SK-N-SH (cell line): ENCODE measurements at regions of chr17 and their contacts with region 1.

Region 1: DNA sequence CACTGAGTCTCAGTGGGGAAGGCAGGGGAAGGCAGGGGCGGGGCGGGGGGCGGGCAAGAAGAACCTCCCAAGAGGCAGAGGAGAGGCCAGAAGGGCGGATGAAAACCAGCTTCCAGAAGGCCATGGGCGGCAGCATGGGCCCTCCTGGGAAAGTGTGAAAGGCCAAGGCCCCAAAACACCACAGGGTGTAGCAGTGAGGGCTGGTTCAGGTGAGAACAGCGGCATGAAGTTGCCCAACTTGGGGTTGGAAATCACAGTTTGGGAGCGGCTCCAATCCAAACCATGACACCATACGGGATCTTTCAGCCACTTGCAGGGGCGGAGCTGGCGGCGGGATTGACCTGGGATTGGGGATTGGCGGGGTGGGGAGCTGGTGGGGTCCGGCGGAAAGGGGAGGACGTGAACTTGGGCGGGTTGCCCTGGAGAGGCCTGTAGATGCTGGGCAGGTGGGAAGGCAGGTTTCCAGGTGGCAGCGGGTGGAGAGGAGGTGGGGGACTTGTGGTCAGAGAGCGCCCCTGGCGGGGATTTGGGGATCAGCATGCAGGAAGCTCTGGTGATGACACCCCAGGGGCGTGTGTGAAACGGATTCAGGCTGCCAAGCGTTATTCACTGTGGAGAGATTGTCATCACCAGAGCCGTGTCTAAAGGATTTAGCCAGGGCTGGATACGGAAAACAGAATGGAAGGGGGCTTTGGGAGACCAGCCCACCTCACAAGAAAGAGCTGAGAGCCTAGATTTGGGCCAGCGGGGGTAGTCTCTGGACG is 80.9 kb downstream of the ARHGAP23 start:
- DNase-seq: peak; percentile 98
- H3K4me3 ChIP-seq: peak overlapping the region; percentile 17 to 50; a peak in 2 of 4 replicates
- H3K27ac ChIP-seq: no peak overlapping the region
- H3K4me1 ChIP-seq: peaks cover 13 to 14% of the 10 kb centered on the region in 2 experiments; a peak in 2 of 4 replicates
- H3K27me3 ChIP-seq: no peaks in the 10 kb centered on the region
- CTCF ChIP-seq: peak; percentile 83
- EP300 ChIP-seq: no peak
- RAD21 ChIP-seq: peak; percentile 70

Region 2: DNA sequence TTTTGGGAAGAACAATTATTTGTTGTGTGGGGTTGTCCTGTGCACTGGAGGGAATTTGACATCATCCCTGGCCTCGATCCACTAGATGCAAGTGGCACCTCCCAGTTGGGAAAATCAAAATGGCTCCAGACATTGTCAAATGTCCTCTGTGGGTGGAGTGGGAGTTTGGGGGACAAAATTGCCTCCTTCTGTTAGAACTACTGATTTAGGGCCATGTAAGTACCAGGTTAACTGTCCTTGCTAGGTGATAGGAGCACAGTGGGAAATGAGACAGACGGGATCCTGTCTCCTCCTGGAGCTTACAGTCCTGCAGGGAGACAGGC is 24.1 kb before region 1 on chr17:
- CTCF ChIA-PET with region 1: interaction called, 15 read pairs
- POLR2A ChIA-PET with region 1: no interaction called
- DNase-seq: no peak
- H3K4me3 ChIP-seq: peak overlapping the region in 1 of 2 experiments; percentile 43; a peak in 1 of 4 replicates
- H3K27ac ChIP-seq: no peak overlapping the region
- H3K4me1 ChIP-seq: no peaks in the 10 kb centered on the region
- H3K27me3 ChIP-seq: no peaks in the 10 kb centered on the region
- CTCF ChIP-seq: no peak
- EP300 ChIP-seq: no peak
- RAD21 ChIP-seq: no peak

Region 3: DNA sequence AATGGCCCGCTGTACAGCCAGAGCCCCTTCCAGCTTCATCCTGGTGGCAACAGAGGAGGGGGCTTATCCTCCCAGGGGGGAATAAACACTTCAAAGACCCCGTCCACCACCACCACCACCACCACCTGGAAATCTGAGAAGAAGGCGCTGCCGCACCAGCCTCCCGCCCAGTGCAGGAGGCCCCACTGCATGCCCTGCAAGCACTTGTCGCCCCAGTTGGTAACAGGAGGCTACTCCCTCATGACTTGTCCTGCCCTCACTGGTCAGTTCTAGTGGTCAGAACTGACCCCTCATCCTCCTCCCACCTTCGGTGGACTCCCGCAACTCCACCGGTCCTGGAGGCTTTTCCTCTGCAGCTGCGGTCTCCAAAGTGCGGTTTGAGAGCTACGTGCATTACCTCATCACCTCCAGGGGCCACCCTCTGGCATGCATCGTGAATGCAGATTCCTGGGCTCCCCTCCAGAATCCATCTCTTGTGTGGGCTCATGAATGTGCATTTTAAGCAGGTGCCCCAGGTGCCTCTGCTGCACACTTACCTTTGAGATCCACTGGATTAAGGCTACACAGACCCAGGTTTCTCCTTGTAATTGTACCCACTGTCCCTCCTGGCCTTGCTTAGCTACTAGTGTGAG is 24.8 kb after region 1 on chr17:
- CTCF ChIA-PET with region 1: interaction called, 32 read pairs
- POLR2A ChIA-PET with region 1: no interaction called
- DNase-seq: no peak
- H3K4me3 ChIP-seq: no peak overlapping the region
- H3K27ac ChIP-seq: no peak overlapping the region
- H3K4me1 ChIP-seq: no peaks in the 10 kb centered on the region
- H3K27me3 ChIP-seq: no peaks in the 10 kb centered on the region; the same call in 1 of the 2 replicates
- CTCF ChIP-seq: no peak
- EP300 ChIP-seq: no peak
- RAD21 ChIP-seq: no peak

Region 4: DNA sequence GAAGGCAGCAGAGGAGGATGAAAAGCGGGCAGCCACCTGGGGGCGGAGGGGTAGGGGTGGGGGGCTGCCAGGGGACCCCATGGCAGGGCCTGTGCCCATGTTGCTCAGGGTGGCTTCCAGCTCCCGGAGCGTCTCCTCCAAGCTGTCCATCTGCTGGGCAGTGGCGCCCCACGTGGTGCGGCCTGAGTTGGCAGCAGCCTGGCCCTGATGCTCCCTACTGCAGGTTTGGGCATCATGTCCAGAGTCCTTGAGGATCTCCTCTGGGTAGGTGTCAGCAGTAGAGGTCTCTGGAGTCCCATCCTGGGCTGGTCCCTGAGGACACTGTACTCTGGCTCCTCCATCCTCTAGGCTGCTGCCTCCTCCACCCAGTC is 35.6 kb after region 1 on chr17:
- CTCF ChIA-PET with region 1: interaction called, 21 read pairs
- POLR2A ChIA-PET with region 1: interaction called, 3 read pairs
- DNase-seq: no peak
- H3K4me3 ChIP-seq: no peak overlapping the region
- H3K27ac ChIP-seq: no peak overlapping the region
- H3K4me1 ChIP-seq: no peaks in the 10 kb centered on the region; a peak in 1 of 4 replicates
- H3K27me3 ChIP-seq: no peaks in the 10 kb centered on the region
- CTCF ChIP-seq: no peak
- EP300 ChIP-seq: no peak
- RAD21 ChIP-seq: no peak

Region 5: DNA sequence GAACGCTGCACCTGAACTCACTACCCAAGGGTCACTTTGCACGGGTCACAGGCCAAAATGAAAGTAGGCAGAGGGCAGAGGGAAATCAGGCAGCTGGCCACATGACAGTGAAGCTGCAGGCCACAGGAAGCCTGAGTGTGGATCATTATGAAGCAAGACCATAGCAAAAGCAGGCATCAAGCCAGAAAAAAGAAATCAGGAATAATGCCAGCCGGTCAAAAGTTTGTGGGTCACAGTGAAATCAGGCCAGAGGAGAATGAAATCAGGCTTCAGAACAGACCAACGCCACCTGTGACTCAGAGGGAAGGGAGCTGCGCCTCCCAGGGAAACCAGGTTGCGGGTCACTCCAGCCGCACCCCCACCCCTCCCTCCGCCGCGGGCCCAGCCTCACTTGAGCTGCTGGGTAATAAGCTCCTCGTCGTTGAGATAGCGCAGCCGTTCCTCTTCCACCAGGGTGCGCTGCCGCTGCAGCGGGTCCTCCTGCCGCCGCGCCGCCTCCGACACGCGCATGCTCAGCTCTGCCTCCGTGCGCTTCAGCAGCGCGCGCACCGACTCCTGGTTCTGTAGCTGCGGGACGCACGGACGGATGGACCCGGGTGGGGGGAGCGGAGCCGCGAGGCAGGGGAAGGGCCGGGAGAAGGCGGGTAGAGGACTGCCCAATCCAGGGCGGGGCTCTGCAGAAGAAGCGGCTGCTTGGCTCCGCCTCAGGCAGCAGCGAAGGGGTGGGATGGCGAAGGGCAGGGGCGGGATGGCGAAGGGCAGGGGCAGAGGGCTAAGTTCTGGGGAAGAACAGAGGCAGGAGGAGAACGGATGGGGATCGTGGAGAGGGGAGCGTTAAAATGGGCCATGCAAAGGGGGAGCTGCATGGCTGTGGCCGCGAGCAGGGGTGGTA is 48.9 kb after region 1 on chr17:
- CTCF ChIA-PET with region 1: interaction called, 30 read pairs
- POLR2A ChIA-PET with region 1: no interaction called
- DNase-seq: peak; percentile 97
- H3K4me3 ChIP-seq: peak overlapping the region; percentile 35 to 55
- H3K27ac ChIP-seq: no peak overlapping the region; a peak in 1 of 4 replicates
- H3K4me1 ChIP-seq: peaks cover 0 to 30% of the 10 kb centered on the region in 2 experiments; a peak in 2 of 4 replicates
- H3K27me3 ChIP-seq: no peaks in the 10 kb centered on the region
- CTCF ChIP-seq: peak; percentile 84
- EP300 ChIP-seq: no peak; a peak in 1 of 4 replicates
- RAD21 ChIP-seq: peak; percentile 83

Region 6: DNA sequence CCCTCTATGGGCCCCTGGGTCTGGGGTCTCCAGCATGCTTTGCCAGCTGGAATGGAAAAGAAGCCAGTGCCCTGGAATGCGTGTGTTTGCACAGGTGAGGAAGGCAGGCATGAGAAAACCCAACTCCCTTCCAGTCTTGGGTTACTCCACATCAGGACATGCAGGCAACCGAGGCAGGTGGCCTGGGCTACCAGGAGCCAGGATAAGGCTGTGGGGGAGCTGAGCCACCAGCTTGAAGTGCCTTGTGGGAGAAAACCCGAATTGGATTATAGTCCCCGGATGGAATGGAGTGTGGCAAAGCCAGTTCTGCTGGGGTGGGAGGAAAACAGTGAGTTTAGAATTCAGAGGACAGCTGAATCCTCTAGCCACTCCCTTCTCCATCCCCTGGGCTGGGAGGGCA is 89.3 kb after region 1 on chr17:
- CTCF ChIA-PET with region 1: interaction called, 14 read pairs
- POLR2A ChIA-PET with region 1: no interaction called
- DNase-seq: peak; percentile 86
- H3K4me3 ChIP-seq: no peak overlapping the region
- H3K27ac ChIP-seq: no peak overlapping the region
- H3K4me1 ChIP-seq: peaks cover 0 to 32% of the 10 kb centered on the region in 2 experiments; a peak in 1 of 4 replicates
- H3K27me3 ChIP-seq: peaks cover 9% of the 10 kb centered on the region; the same call in 1 of the 2 replicates
- CTCF ChIP-seq: no peak
- EP300 ChIP-seq: no peak
- RAD21 ChIP-seq: no peak

Region 7: GRCh38 chr17:38617011-38617867 is 108.0 kb after region 1 on chr17:
- CTCF ChIA-PET with region 1: interaction called, 14 read pairs
- POLR2A ChIA-PET with region 1: no interaction called
- DNase-seq: no peak
- H3K4me3 ChIP-seq: no peak overlapping the region
- H3K27ac ChIP-seq: no peak overlapping the region
- H3K4me1 ChIP-seq: no peaks in the 10 kb centered on the region; a peak in 1 of 4 replicates
- H3K27me3 ChIP-seq: peaks cover 10% of the 10 kb centered on the region; the same call in 1 of the 2 replicates
- CTCF ChIP-seq: no peak
- EP300 ChIP-seq: no peak
- RAD21 ChIP-seq: no peak